ENCODE measurements at regions of chr1 and their contacts with region 1.

Region 1: GRCh38 chr1:155940531-155940992 is 876 bp upstream of the RXFP4 start:
- DNase-seq: no peak
- ATAC-seq: peak; percentile 10; the same call in 1 of the 2 replicates
- H3K4me3 Mint-ChIP-seq: no peak overlapping the region
- H3K27ac Mint-ChIP-seq: peak overlapping the region; percentile 18; the same call in 1 of the 2 replicates
- H3K4me1 Mint-ChIP-seq: peaks cover 25% of the 10 kb centered on the region
- H3K27me3 Mint-ChIP-seq: no peaks in the 10 kb centered on the region
- CTCF ChIP-seq: no peak

Region 2: GRCh38 chr1:155859234-155859829 is 81.2 kb before region 1 on chr1 and contains the start of gene SYT11:
- CTCF ChIA-PET with region 1: no interaction called
- POLR2A ChIA-PET with region 1: no interaction called
- DNase-seq: peak; percentile 94
- ATAC-seq: peak; percentile 94
- H3K4me3 Mint-ChIP-seq: peak within 1 kb of the TSS; percentile 68
- H3K27ac Mint-ChIP-seq: peak within 1 kb of the TSS; percentile 91
- H3K4me1 Mint-ChIP-seq: peaks cover 20% of the 10 kb centered on the region
- H3K27me3 Mint-ChIP-seq: no peaks in the 10 kb centered on the region; the same call in 1 of the 2 replicates
- CTCF ChIP-seq: no peak
- total RNA-seq, gene SYT11: 6.1 to 8.9 TPM (median 7.5 TPM) in 3 replicates

Region 3: GRCh38 chr1:155970531-155971167 is 30.1 kb after region 1 on chr1:
- CTCF ChIA-PET with region 1: interaction called, 10 read pairs
- POLR2A ChIA-PET with region 1: interaction called, 10 read pairs
- DNase-seq: no peak
- ATAC-seq: peak; percentile 15
- H3K4me3 Mint-ChIP-seq: no peak overlapping the region
- H3K27ac Mint-ChIP-seq: peak overlapping the region; percentile 73
- H3K4me1 Mint-ChIP-seq: peaks cover 84% of the 10 kb centered on the region
- H3K27me3 Mint-ChIP-seq: no peaks in the 10 kb centered on the region
- CTCF ChIP-seq: no peak